ENCODE measurements at regions of chr15 and their contacts with region 1.

Region 1: DNA sequence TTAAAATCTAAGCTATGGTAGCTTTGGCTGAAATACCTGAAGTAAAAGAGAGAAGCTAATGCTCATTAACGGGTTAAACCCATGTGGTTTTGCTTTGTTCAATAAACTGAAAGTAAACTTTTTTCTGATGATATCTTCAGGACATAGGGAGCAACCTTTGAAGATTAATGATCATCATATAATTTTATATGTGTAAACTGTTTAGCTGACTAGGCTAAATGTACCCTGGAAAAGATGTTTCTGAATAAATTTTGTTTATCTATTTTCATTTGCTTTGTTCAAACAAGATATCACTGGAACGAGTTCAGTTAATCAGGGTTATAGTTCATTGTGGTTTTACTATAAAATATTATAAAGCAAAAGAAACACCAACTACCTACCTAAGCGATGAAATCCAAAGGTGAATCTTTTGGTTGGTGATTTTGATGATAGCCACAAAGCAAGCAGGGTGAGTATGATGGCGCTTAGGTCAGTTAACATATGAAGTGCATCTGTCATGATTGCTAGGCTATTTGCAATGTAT is 11.7 kb downstream of the SLC30A4 start:
- DNase-seq: no peak
- H3K4me3 ChIP-seq: no peak overlapping the region
- H3K27ac ChIP-seq: no peak overlapping the region
- H3K4me1 ChIP-seq: no peaks in the 10 kb centered on the region
- H3K27me3 ChIP-seq: no peaks in the 10 kb centered on the region
- CTCF ChIP-seq: no peak

Region 2: DNA sequence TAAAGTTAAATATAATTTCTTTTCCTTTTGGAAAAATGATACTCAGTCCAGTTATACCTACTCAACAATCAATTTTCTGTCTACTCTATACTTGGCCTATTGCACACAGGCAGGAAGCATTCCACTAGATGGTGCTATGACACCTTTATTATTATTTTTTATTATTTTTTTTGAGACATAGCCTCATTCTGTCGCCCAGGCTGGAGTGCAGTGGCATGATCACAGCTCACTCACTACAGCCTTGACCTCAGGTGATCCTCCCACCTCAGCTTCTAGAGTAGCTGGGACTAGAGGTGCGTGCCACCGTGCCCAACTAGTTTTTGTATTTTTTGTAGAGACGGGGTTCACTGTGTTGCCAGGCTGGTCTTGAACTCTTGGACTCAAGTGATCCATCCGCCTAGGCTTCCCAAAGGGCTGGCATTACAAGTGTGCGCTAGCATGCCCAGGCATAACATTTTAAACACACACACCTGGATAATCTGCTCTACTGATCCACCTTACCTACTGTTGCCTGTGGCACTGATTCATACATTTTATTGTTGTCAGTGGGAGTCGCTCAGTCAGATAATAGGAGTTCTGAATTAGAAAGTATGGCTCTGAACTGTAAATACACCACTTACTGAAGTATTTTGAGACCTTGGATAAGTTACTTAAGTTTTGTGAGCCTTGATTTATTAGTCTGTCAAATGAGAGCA is 917.6 kb before region 1 on chr15:
- CTCF ChIA-PET with region 1: interaction called, 13 read pairs
- POLR2A ChIA-PET with region 1: no interaction called
- intact Hi-C with region 1: no loop called
- DNase-seq: no peak
- H3K4me3 ChIP-seq: no peak overlapping the region
- H3K27ac ChIP-seq: no peak overlapping the region
- H3K4me1 ChIP-seq: peaks cover 12% of the 10 kb centered on the region
- H3K27me3 ChIP-seq: no peaks in the 10 kb centered on the region
- CTCF ChIP-seq: peak; percentile 48

Region 3: DNA sequence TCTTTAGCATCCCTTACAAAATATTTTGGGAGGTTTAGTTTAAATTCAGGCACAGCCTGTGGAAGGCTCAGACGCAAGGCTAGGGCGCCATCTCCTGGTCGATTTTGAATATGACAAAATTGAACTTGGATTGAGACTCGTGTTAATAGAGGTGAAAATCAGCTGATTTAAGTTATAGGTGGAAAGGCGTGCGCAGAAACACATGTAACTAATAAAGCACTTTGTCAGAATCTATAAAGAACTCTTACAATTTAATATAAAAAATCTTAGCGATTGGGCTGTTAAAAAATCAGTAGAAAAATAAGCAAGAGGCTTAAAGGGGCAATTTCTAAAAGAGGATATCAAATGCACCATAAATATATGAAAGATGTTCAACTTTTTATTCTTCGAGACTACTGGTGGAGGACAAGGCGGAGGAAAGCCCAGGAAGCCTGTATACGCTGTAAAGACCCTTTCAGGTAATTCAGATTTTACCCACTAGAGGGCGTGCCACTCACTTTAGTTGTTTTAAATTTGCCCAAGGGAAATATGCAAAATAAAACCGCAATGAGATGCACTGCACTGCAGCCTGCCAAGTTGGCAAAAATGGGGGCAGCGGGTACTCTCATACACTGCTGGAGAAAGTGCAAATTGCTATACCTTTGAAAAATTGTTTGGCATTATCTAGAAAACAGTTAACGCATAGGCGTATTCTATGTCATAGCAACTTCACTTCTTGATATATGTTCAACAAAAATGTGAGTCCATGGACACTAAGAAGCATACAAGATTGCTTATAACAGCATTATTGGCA is 53.0 kb before region 1 on chr15:
- CTCF ChIA-PET with region 1: no interaction called
- POLR2A ChIA-PET with region 1: no interaction called
- intact Hi-C with region 1: no loop called
- DNase-seq: peak; percentile 66 to 67
- H3K4me3 ChIP-seq: peak overlapping the region; percentile 56
- H3K27ac ChIP-seq: peak overlapping the region; percentile 89
- H3K4me1 ChIP-seq: peaks cover 48% of the 10 kb centered on the region
- H3K27me3 ChIP-seq: no peaks in the 10 kb centered on the region
- CTCF ChIP-seq: peak; percentile 88

Region 4: GRCh38 chr15:45522328-45523160 is 11.7 kb after region 1 on chr15 and contains the start of gene SLC30A4:
- CTCF ChIA-PET with region 1: no interaction called
- POLR2A ChIA-PET with region 1: no interaction called
- intact Hi-C with region 1: no loop called
- DNase-seq: peak in 1 of 2 experiments; percentile 81
- H3K4me3 ChIP-seq: peak within 1 kb of the TSS; percentile 73
- H3K27ac ChIP-seq: no peak within 1 kb of the TSS
- H3K4me1 ChIP-seq: peaks cover 9% of the 10 kb centered on the region; the same call in 1 of the 2 replicates
- H3K27me3 ChIP-seq: no peaks in the 10 kb centered on the region
- CTCF ChIP-seq: no peak; the same call in 1 of the 2 replicates
- total RNA-seq, gene SLC30A4: 2.7 and 3.0 TPM in 2 replicates